Aorta (tissue), 5 donors: ENCODE measurements at regions of chr2 and their contacts with region 1.

Region 1: GRCh38 chr2:235070063-235070706 is 118.4 kb downstream of the SH3BP4 start:
- DNase-seq: no peak
- ATAC-seq: no peak
- H3K4me3 ChIP-seq: no peak overlapping the region
- H3K27ac ChIP-seq: peak overlapping the region in 1 of 2 donors; percentile 17
- H3K4me1 ChIP-seq: no peaks in the 10 kb centered on the region
- H3K27me3 ChIP-seq: no peaks in the 10 kb centered on the region

Region 2: GRCh38 chr2:234741976-234742375 is 328.2 kb before region 1 on chr2:
- intact Hi-C with region 1: no loop called
- DNase-seq: no peak
- ATAC-seq: no peak
- H3K4me3 ChIP-seq: no peak overlapping the region
- H3K27ac ChIP-seq: no peak overlapping the region
- H3K4me1 ChIP-seq: no peaks in the 10 kb centered on the region
- H3K27me3 ChIP-seq: no peaks in the 10 kb centered on the region

Region 3: DNA sequence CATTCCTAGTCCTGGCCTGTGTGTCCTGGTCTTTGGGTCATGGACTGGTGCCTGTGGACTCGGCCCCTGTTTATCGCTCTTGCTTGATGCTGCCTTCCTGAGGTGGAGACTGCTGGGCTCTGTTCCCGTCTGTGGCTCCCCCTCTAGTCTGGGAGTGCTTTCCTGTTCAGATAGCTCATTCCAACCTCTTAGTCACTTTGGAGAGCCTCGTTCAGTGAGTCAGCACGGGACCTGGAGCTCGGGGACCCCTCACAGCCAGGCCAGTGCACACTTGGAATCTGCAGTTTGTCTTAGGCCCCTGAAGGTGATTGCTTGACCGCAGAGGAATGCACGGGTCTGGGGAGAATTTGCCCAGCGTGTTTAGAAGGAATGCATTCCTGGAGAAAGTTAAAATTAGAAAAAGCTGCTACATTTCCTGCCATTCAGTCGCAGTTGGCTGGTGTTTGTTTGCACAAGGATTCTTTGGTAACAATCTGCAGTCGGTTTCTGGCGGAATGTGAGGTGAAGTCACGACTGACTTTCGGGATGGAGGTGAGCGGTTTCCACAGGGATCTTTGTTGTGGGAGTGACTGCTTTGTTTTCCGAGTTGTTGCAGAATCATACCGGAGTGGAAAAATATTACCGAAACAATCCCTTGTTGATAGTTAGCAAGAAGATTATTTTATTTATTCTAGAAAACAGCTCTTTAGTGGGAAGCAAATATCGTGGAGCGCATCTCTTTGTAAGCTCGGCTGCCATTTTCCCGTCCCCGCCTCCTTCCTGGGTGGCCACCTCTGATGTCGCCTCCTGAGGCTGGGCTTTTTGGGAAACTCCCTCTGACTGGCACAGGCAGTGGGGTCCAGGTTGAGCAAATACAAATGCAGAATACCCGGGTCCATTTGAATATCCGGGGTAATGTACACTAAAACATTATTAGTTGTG is 88.7 kb before region 1 on chr2:
- intact Hi-C with region 1: loop called in 1 of 2 experiments (anchors 5 kb)
- DNase-seq: peak; percentile 89
- ATAC-seq: peak; percentile 87
- H3K4me3 ChIP-seq: no peak overlapping the region
- H3K27ac ChIP-seq: peak overlapping the region; percentile 73 to 85
- H3K4me1 ChIP-seq: no peaks in the 10 kb centered on the region
- H3K27me3 ChIP-seq: no peaks in the 10 kb centered on the region

Region 4: DNA sequence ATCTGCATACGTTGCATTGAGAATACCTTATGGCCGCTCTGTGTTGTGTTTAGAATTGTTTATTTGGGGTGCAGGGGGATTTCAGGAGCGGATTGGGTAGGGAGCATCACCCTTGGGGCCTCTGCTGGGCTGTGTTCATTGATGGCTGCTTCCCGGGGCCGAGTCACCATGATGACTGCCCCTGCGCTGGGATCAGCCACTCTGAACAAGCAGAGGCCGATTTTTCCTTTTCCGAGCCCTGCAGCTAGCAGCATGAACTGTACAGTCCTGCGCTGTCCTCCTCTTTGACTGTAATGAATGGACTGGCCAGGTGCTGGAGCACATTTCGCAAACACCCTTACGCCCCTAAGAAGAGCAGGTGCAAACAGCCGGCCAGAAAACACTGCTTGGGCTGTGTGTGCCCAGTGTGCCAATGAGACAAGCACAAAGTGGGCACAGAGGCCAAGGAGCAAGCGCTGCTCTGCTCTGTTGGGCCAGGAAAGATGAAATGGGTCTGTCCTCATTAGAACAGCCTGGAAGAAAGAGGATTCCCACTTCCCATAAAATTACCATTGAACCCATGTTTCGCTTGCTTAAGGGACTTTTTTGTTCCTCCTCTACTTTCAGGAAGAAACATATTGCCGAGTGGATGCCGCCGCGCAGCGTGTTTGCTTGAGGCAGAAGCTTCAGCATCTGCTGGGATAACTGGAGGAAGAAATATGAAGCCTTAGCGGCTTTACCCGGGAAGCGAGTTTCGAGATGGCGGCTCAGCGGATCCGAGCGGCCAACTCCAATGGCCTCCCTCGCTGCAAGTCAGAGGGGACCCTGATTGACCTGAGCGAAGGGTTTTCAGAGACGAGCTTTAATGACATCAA is 35.7 kb before region 1 on chr2:
- intact Hi-C with region 1: no loop called
- DNase-seq: no peak
- ATAC-seq: no peak
- H3K4me3 ChIP-seq: no peak overlapping the region
- H3K27ac ChIP-seq: no peak overlapping the region
- H3K4me1 ChIP-seq: no peaks in the 10 kb centered on the region
- H3K27me3 ChIP-seq: no peaks in the 10 kb centered on the region